Spleen (tissue), 13 donors: ENCODE measurements at regions of chr1 and their contacts with region 1.

Region 1: GRCh38 chr1:225777583-225778336 is at the start of gene SRP9:
- DNase-seq: peak; percentile 99
- H3K4me3 ChIP-seq: peak within 1 kb of the TSS; percentile 63 to 93 (median 80)
- H3K27ac ChIP-seq: peak within 1 kb of the TSS; percentile 88 to 99 (median 98)
- H3K4me1 ChIP-seq: peaks cover 34 to 87% (median 63%) of the 10 kb centered on the region in 6 donors
- H3K27me3 ChIP-seq: no peaks in the 10 kb centered on the region
- CTCF ChIP-seq: peak; percentile 85 to 97 (median 95)
- POLR2A ChIP-seq: peak in 2 of 3 donors; percentile 17 to 61
- total RNA-seq, gene SRP9: 145 to 229 (median 159) TPM

Region 2: GRCh38 chr1:225182716-225183115 is 595.0 kb before region 1 on chr1:
- intact Hi-C with region 1: no loop called
- DNase-seq: no peak
- H3K4me3 ChIP-seq: no peak overlapping the region
- H3K27ac ChIP-seq: no peak overlapping the region
- H3K4me1 ChIP-seq: no peaks in the 10 kb centered on the region
- H3K27me3 ChIP-seq: no peaks in the 10 kb centered on the region
- CTCF ChIP-seq: no peak
- POLR2A ChIP-seq: no peak

Region 3: GRCh38 chr1:225817611-225818061 is 39.9 kb after region 1 on chr1:
- intact Hi-C with region 1: no loop called
- DNase-seq: no peak
- H3K4me3 ChIP-seq: no peak overlapping the region
- H3K27ac ChIP-seq: peak overlapping the region; percentile 75 to 90 (median 86)
- H3K4me1 ChIP-seq: peaks cover 37 to 75% (median 60%) of the 10 kb centered on the region in 6 donors
- H3K27me3 ChIP-seq: no peaks in the 10 kb centered on the region
- CTCF ChIP-seq: no peak
- POLR2A ChIP-seq: no peak

Region 4: GRCh38 chr1:225911191-225912130 is 133.7 kb after region 1 on chr1:
- intact Hi-C with region 1: loop called (anchors 5 kb)
- DNase-seq: peak; percentile 92
- H3K4me3 ChIP-seq: peak overlapping the region in 1 of 8 donors; percentile 3
- H3K27ac ChIP-seq: peak overlapping the region in 2 of 8 donors; percentile 1 to 6
- H3K4me1 ChIP-seq: peaks cover 0 to 26% (median 16%) of the 10 kb centered on the region in 6 donors
- H3K27me3 ChIP-seq: no peaks in the 10 kb centered on the region
- CTCF ChIP-seq: peak; percentile 61 to 98 (median 94)
- POLR2A ChIP-seq: no peak

Region 5: GRCh38 chr1:225977937-225978748 is 200.4 kb after region 1 on chr1:
- intact Hi-C with region 1: loop called (anchors 10 kb)
- DNase-seq: no peak
- H3K4me3 ChIP-seq: no peak overlapping the region
- H3K27ac ChIP-seq: peak overlapping the region in 2 of 8 donors; percentile 2 to 21
- H3K4me1 ChIP-seq: peaks cover 0 to 39% (median 7%) of the 10 kb centered on the region in 6 donors
- H3K27me3 ChIP-seq: no peaks in the 10 kb centered on the region
- CTCF ChIP-seq: peak in 1 of 11 experiments; percentile 14
- POLR2A ChIP-seq: no peak